Heart right ventricle (tissue), 16 donors: ENCODE measurements at regions of chr15 and their contacts with region 1.

Region 1: DNA sequence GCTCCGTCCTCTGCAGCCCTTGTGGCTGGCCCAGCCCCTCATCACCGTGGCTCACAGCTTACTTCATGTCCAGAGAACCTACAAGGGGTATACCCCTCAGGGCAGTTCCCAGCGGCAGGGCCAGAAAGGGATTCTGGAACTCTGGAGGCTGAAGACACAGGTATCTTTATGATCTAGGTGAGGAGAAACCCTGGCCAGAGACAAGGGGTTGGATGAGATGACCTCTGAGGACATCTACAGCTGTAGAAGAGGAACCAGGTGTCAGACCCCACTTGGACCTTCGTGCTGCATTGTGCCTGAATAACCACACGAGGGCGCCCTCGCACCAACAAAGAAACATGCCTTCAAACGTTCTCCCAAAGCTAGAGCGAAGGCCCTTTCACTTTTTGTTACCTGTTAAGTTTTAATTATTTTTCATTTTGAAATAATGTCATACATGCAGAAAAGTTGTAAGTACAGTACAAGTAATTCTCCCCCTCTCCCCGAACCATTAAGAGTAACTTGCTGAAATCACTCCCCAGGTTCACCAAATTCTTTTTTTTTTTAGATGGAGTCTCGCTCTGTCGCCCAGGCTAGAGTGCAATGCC is 118.7 kb upstream of the SMAD3 start:
- DNase-seq: peak; percentile 60 to 63
- ATAC-seq: peak; percentile 45 to 79 (median 68)
- H3K4me3 ChIP-seq: peak overlapping the region in 1 of 10 donors; percentile 6
- H3K27ac ChIP-seq: no peak overlapping the region
- H3K4me1 ChIP-seq: peaks cover 0 to 9% (median 0%) of the 10 kb centered on the region in 9 donors
- H3K27me3 ChIP-seq: no peaks in the 10 kb centered on the region
- CTCF ChIP-seq: peak; percentile 84 to 98 (median 92)

Region 2: DNA sequence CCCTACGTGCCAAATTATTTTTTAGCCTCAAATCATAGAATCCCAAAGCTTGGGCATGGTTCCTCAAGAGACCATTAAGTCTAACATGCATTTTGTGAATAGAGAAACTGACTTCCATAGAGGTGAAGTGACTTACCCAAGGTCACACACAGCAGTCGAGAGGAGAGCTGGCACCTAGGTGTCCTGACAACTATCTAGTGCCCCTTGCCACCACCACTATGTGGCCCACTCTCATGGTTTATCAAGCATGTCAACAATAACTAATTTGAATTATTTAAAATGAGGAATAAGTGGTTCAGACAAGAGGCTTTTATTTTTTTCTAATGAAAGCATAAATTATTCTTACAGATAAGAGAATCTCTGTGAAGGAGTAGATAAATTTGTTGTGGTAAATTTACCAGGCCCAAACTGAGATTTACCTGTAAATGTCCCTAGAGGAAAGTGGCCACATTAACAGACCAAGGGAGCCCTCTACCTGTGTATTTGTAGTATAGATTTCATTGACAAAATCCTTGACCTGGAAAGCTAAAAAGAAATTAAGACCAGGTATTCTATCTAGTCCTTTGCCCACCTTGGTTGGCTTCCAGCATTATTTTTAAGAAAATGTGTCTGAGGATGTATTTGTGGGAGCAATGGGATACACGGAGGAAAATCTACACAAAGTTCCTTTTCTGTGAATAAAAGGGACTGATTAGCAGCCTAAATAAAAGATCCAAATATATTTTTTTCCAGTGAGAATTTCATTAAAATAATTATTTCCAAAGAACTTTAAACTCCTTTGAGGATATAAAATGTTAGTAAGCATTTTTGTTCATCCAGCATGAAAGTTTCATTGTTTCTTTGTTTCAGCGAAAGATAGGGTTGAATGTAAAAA is 357.1 kb after region 1 on chr15:
- intact Hi-C with region 1: loop called (anchors 1 to 5 kb)
- DNase-seq: peak in 1 of 2 donors; percentile 6
- ATAC-seq: peak in 2 of 8 donors; percentile 58 to 65
- H3K4me3 ChIP-seq: no peak overlapping the region
- H3K27ac ChIP-seq: no peak overlapping the region
- H3K4me1 ChIP-seq: no peaks in the 10 kb centered on the region
- H3K27me3 ChIP-seq: no peaks in the 10 kb centered on the region
- CTCF ChIP-seq: peak; percentile 17 to 75 (median 57)

Region 3: GRCh38 chr15:67433495-67434099 is 486.9 kb after region 1 on chr15:
- intact Hi-C with region 1: loop called (anchors 1 to 5 kb)
- DNase-seq: peak in 1 of 2 donors; percentile 29
- ATAC-seq: peak in 7 of 8 donors; percentile 37 to 71 (median 62)
- H3K4me3 ChIP-seq: no peak overlapping the region
- H3K27ac ChIP-seq: no peak overlapping the region
- H3K4me1 ChIP-seq: no peaks in the 10 kb centered on the region
- H3K27me3 ChIP-seq: no peaks in the 10 kb centered on the region
- CTCF ChIP-seq: peak; percentile 43 to 80 (median 71)